Activated CD8-positive, alpha-beta T cell treated with anti-CD3 and anti-CD28 coated beads for 36 hours (primary cell): ENCODE measurements at regions of chr7 and their contacts with region 1.

Region 1: GRCh38 chr7:151448261-151449252 is 8.6 kb upstream of the CRYGN start:
- DNase-seq: peak; percentile 86
- ATAC-seq: peak; percentile 83
- H3K4me3 Mint-ChIP-seq: peak overlapping the region; percentile 57
- H3K27ac Mint-ChIP-seq: no peak overlapping the region
- H3K4me1 Mint-ChIP-seq: peaks cover 11% of the 10 kb centered on the region
- H3K27me3 Mint-ChIP-seq: peaks cover 5% of the 10 kb centered on the region
- CTCF ChIP-seq: peak; percentile 90

Region 2: GRCh38 chr7:150737265-150738055 is 711.1 kb before region 1 on chr7 and contains the start of gene GIMAP5:
- CTCF ChIA-PET with region 1: no interaction called
- POLR2A ChIA-PET with region 1: no interaction called
- intact Hi-C with region 1: no loop called
- DNase-seq: peak; percentile 70
- ATAC-seq: peak; percentile 60
- H3K4me3 Mint-ChIP-seq: peak within 1 kb of the TSS; percentile 89
- H3K27ac Mint-ChIP-seq: peak within 1 kb of the TSS; percentile 97
- H3K4me1 Mint-ChIP-seq: peaks cover 72% of the 10 kb centered on the region
- H3K27me3 Mint-ChIP-seq: no peaks in the 10 kb centered on the region
- CTCF ChIP-seq: no peak
- total RNA-seq, gene GIMAP5: 37.6 to 40.7 TPM

Region 3: GRCh38 chr7:151315038-151315655 is 133.4 kb before region 1 on chr7:
- CTCF ChIA-PET with region 1: interaction called, 45 read pairs
- POLR2A ChIA-PET with region 1: no interaction called
- intact Hi-C with region 1: loop called (anchors 2 kb)
- DNase-seq: peak; percentile 87
- ATAC-seq: peak; percentile 89
- H3K4me3 Mint-ChIP-seq: peak overlapping the region; percentile 5
- H3K27ac Mint-ChIP-seq: no peak overlapping the region
- H3K4me1 Mint-ChIP-seq: peaks cover 10% of the 10 kb centered on the region
- H3K27me3 Mint-ChIP-seq: no peaks in the 10 kb centered on the region
- CTCF ChIP-seq: peak; percentile 88

Region 4: DNA sequence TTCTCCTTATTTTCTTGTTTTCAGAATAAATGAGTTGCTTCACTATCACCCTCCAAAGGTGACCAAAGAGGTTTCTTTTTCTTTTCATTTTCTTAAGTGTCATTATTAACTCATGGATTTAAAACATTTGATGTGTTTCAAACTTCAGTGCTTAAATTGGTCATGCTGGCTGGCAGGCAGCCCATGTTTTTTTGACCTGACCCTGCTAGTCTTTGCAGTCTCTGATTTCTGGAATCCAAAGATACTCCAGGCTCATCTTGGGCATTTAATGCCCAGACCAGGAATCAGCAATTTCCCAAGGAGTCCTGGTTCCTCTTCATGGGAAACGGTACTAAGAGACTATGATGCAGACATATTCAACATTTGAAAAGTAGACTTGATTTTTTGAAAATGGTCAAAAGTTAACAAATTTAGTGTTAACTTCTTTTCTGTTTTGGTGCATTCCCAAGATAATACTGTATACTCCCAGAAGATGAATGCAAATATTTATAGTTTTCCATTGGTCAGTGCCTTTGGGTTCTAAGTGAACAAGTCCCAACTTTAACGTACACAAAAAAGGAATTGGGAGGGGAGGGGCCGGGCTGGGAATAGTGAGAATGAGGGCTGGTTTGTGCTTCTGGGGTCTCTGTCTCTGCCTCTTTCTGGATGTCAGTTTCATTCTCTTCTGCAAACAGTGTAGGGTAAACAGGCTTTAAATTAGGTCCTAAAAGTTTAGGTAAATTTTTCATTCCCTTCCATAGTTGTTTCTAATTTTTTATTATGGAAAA is 87.2 kb before region 1 on chr7:
- CTCF ChIA-PET with region 1: interaction called, 227 read pairs
- POLR2A ChIA-PET with region 1: interaction called, 4 read pairs
- intact Hi-C with region 1: no loop called
- DNase-seq: no peak
- ATAC-seq: no peak
- H3K4me3 Mint-ChIP-seq: no peak overlapping the region
- H3K27ac Mint-ChIP-seq: no peak overlapping the region
- H3K4me1 Mint-ChIP-seq: no peaks in the 10 kb centered on the region
- H3K27me3 Mint-ChIP-seq: no peaks in the 10 kb centered on the region
- CTCF ChIP-seq: no peak

Region 5: GRCh38 chr7:151381348-151382078 is 67.0 kb before region 1 on chr7:
- CTCF ChIA-PET with region 1: interaction called, 22 read pairs
- POLR2A ChIA-PET with region 1: no interaction called
- intact Hi-C with region 1: no loop called
- DNase-seq: peak; percentile 44
- ATAC-seq: peak; percentile 66
- H3K4me3 Mint-ChIP-seq: peak overlapping the region; percentile 60
- H3K27ac Mint-ChIP-seq: no peak overlapping the region
- H3K4me1 Mint-ChIP-seq: peaks cover 12% of the 10 kb centered on the region
- H3K27me3 Mint-ChIP-seq: peaks cover 21% of the 10 kb centered on the region
- CTCF ChIP-seq: no peak

Region 6: DNA sequence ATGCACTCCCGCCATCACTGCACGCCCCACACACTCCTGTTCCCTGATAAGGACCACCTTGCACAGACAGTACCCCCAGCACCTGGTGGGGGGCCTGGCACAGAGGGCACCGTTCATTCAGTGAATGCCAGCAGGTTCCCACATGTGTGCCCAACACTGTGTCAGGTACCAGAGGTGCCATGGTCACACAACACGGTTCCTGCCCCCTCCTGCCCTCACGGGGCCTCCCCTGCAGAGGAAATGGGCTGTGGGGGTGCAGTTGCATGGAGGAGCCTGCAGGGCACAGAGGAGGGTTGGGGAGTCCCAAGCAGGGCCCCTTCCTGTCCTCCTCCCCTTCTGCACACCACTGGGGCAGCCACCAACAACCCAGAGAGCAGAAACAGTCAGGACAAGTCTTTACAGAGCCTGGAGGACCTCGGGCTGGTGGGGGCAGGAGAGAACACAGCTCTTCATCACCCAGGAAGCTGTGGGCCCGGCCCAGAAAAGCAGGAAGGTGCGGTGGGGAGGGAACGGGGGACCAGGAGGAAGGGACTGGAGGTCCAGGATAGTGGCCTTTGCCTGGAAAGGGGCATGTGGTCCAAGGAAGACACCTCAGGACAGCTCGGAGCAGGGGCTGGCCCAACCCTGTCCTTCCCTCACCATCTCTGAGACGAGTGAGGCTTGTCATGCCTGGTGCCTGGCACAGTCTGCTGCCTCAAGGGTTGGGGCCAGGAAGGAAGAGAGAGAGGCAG is 15.6 kb before region 1 on chr7:
- CTCF ChIA-PET with region 1: interaction called, 51 read pairs
- POLR2A ChIA-PET with region 1: interaction called, 3 read pairs
- intact Hi-C with region 1: no loop called
- DNase-seq: peak; percentile 88
- ATAC-seq: peak; percentile 96
- H3K4me3 Mint-ChIP-seq: peak overlapping the region; percentile 43
- H3K27ac Mint-ChIP-seq: peak overlapping the region; percentile 84
- H3K4me1 Mint-ChIP-seq: peaks cover 44% of the 10 kb centered on the region
- H3K27me3 Mint-ChIP-seq: no peaks in the 10 kb centered on the region
- CTCF ChIP-seq: peak; percentile 69

Region 7: GRCh38 chr7:151472644-151473380 is 24.3 kb after region 1 on chr7:
- CTCF ChIA-PET with region 1: interaction called, 18 read pairs
- POLR2A ChIA-PET with region 1: interaction called, 3 read pairs
- intact Hi-C with region 1: no loop called
- DNase-seq: no peak
- ATAC-seq: no peak
- H3K4me3 Mint-ChIP-seq: no peak overlapping the region
- H3K27ac Mint-ChIP-seq: peak overlapping the region; percentile 73
- H3K4me1 Mint-ChIP-seq: peaks cover 45% of the 10 kb centered on the region
- H3K27me3 Mint-ChIP-seq: no peaks in the 10 kb centered on the region
- CTCF ChIP-seq: no peak

Region 8: DNA sequence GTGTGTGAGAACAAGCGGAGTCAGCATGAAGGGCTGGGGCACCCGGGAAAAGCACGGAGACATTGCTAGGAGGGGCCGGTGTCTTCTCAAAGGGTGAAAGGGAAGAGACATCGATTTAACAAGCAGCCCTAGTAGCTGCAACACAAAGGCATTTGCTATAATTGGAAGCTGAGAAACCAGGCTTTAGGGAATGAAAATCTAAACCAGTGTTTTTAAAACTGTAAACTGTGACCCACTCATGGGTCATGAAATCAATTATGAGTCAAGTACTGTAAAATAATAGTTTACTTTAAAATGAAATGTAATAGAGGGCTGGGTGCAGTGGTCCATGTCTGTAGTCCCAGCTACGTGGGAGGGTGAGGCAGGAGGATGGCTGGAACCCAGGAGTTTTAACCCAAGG is 199.9 kb after region 1 on chr7:
- CTCF ChIA-PET with region 1: no interaction called
- POLR2A ChIA-PET with region 1: no interaction called
- intact Hi-C with region 1: no loop called
- DNase-seq: no peak
- ATAC-seq: no peak
- H3K4me3 Mint-ChIP-seq: no peak overlapping the region
- H3K27ac Mint-ChIP-seq: no peak overlapping the region
- H3K4me1 Mint-ChIP-seq: peaks cover 3% of the 10 kb centered on the region
- H3K27me3 Mint-ChIP-seq: no peaks in the 10 kb centered on the region
- CTCF ChIP-seq: no peak